Gastrocnemius medialis (tissue), 4 donors: ENCODE measurements at regions of chr12 and their contacts with region 1.

Region 1: DNA sequence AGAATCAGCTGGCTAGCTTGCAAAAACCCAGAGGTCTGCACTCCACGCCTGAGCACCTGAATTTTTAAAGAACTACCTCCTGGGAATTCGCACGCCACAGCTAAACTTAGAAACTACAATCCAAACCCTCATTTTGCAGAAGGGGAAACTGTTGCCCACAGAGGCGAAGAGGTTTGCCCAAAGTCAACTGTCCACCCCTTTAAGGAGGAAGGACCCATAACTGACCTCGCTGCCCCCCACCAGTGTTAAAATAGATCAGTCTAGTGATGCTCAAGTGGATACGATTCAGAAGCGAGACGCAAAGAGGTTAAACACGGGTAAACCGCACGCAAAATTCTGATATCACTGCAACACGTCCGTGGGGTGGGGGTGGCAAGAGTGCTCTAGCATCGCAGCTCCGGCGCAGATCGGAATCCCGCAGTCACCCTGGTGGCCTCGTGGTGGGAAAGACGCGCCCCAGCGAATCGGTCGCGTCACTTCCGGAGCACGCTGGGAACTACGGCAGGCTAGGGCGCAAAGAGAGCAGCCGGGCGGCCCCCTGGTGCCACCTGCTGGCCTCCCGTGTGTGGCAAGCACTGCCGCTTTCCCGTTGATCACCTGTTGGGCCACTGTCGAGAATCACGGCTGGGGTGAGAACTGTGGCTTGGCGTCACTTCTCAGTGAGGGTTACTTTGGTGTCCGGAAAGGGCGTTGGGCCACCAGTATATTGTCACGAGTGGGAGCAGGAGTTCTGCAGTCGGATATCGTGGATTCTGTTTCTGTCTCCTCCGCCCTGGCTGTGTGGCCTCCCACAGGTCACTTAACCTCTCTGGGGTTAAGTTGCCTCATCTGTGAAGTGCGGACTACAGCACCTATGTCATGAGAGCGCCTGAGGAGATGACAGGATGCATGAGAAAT is at the start of gene ALKBH2:
- DNase-seq: peak; percentile 89 to 92
- ATAC-seq: peak; percentile 69 to 72
- H3K4me3 ChIP-seq: peak within 1 kb of the TSS; percentile 61 to 93 (median 64)
- H3K27ac ChIP-seq: peak within 1 kb of the TSS; percentile 79 to 88 (median 81)
- H3K4me1 ChIP-seq: peaks cover 22 to 23% of the 10 kb centered on the region in 2 donors
- H3K27me3 ChIP-seq: no peaks in the 10 kb centered on the region
- CTCF ChIP-seq: peak; percentile 93 to 99 (median 97)
- POLR2A ChIP-seq: peak; percentile 52 to 77
- total RNA-seq, gene ALKBH2: 8.7 to 22.5 (median 18.2) TPM

Region 2: DNA sequence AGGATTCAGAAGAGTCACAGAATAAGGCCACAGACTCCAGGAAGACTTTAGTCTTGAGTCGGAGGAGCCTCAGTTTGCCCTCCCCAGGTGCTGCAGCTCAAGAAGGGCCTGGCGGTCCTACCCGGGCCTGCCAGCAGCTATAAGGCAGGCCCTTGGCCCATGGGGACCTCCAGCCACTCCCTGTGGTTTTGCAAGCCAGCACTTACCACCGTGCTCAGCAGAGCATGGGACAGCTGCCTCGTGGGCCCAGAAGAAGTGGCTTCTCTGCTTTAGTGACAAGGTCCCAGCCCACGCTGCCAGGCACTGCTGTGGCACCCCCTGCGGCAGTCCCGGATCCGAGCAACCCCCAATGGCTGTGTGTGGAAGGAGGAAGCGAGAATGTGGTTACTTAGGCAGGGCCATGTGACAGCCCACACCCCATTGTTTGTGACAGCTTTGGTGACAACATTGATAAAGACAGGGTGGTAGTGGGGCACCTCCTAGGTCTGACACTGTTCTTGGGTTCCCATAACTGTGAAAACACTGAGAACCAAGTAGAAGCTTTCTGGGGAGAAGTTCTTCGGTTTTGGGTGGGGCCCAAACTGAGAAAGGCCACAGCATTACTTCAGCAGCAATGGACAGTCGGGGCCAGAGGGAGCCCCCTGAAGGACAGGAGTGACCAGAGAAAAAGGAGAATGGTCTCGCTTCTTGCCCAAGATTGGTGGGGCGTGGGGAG is 459.6 kb before region 1 on chr12 and contains the start of gene SELPLG:
- in situ Hi-C with region 1: loop called in 2 of 4 experiments (anchors 25 kb)
- intact Hi-C with region 1: no loop called
- DNase-seq: peak; percentile 36 to 59
- ATAC-seq: peak in 1 of 2 donors; percentile 26
- H3K4me3 ChIP-seq: peak within 1 kb of the TSS in 1 of 4 donors; percentile 24
- H3K27ac ChIP-seq: peak within 1 kb of the TSS in 3 of 4 donors; percentile 31 to 48 (median 44)
- H3K4me1 ChIP-seq: peaks cover 12 to 14% of the 10 kb centered on the region in 2 donors
- H3K27me3 ChIP-seq: peaks cover 0 to 11% (median 0%) of the 10 kb centered on the region in 3 donors
- CTCF ChIP-seq: no peak
- POLR2A ChIP-seq: peak in 1 of 2 donors; percentile 10
- total RNA-seq, gene SELPLG: 0.19 to 5.0 (median 2.6) TPM

Region 3: DNA sequence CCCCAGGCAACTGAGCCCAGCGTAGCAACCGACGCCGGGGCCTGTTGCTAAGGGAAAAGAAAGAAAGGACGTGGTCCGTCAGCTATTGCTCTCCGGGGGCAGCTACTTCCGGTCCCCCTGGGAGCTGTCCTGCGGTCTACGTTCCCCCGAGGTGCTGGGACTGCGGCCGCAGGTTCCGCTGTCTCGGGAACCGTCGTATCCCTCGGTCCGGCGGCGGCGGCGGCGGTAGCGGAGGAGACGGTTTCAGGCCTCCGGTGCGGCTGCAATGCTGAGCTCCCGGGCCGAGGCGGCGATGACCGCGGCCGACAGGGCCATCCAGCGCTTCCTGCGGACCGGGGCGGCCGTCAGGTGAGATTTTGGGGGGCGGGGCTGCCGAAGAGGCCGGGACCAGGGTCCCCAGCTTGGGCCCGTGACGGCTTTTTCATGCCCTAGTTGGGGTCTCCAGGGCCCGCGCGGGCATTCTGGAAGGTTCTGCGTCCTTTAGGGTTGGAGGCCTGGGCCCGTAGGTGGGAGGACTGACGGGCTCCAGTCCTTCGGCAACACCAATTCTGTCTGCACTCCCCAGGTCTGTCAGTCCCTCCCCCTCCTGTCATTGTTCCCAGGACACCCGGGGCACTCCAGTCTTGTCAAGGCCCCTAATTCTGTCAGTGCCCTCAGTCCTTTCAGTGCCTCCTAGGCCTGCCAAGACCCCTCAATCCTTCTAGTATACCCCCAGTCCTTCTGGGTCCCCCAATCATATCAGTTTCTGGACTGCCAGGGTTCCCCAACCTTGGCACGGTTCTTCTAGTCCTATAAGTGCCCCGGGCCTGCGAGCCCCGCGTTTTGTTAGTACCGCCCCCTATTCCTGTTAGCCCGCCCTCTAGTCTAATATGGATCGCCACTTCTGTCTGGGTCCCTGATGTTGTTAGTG is 40.6 kb before region 1 on chr12 and contains the start of gene USP30:
- in situ Hi-C with region 1: no loop called
- intact Hi-C with region 1: loop called (anchors 1 kb)
- DNase-seq: peak; percentile 68 to 74
- ATAC-seq: peak; percentile 96
- H3K4me3 ChIP-seq: peak within 1 kb of the TSS; percentile 90 to 92 (median 91)
- H3K27ac ChIP-seq: peak within 1 kb of the TSS; percentile 86 to 94 (median 90)
- H3K4me1 ChIP-seq: peaks cover 13 to 21% of the 10 kb centered on the region in 2 donors
- H3K27me3 ChIP-seq: no peaks in the 10 kb centered on the region
- CTCF ChIP-seq: peak in 2 of 5 experiments; percentile 6 to 13
- POLR2A ChIP-seq: no peak
- total RNA-seq, gene USP30: 6.4 to 21.2 (median 13.3) TPM

Region 4: DNA sequence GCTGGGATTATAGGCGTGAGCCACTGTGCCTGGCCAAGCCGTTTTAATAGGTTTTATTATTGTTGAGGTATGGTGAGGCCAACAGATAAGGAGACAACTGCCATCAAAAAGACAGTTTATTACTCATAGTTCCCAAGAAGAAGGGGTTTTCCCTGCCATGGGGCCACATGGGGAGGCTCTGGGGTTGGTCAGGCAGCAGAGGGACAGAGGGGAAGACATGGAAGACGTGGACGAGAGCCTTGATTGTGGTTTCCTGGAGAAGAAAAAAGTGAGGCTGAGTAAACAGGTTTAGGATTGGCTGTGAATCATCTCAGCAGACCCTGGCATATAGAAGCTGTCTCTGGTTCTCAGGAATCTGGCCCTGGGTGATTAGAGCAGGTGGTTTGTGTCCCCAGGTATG is 145.9 kb after region 1 on chr12:
- in situ Hi-C with region 1: no loop called
- intact Hi-C with region 1: no loop called
- DNase-seq: no peak
- ATAC-seq: no peak
- H3K4me3 ChIP-seq: no peak overlapping the region
- H3K27ac ChIP-seq: peak overlapping the region in 2 of 4 donors; percentile 3 to 4
- H3K4me1 ChIP-seq: no peaks in the 10 kb centered on the region
- H3K27me3 ChIP-seq: no peaks in the 10 kb centered on the region
- CTCF ChIP-seq: no peak
- POLR2A ChIP-seq: no peak